Cardiac septum (tissue), 1 donor: ENCODE measurements at regions of chr16 and their contacts with region 1.

Region 1: DNA sequence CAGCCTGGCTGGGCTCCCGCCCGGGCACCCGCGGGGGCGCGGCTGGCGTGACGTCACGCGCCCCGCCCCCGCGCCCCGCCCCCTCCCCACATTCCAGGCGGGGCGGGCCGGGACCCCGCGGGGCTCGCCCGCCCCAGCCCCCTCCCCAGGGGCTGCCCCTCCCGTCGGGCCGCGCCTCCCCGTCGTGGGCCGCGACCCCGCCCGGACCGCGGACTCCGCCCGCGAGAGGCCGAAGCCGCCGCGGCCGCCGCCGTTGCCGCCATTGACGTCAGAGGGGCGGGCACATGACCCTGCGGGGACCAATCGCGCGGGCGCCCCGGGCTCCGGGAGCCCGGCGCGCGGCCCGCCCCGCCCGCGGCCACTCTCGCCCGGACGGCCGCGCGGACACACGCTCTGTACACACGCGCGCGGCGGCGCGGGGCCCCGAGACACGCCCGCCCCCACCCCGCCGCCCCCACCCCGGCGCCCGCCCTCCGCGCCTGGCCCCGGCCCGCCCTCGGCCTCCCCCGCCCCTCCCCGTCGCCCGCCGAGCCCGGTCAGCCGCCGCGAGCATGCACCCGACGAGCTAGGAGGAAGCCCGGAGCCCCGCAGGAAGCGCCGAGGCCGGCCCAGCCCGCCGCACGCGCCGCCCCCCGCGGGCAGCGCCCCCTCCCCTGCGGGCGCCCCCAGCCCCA is at the start of gene CMIP:
- DNase-seq: peak; percentile 91
- total RNA-seq, gene CMIP: 19.8 TPM

Region 2: DNA sequence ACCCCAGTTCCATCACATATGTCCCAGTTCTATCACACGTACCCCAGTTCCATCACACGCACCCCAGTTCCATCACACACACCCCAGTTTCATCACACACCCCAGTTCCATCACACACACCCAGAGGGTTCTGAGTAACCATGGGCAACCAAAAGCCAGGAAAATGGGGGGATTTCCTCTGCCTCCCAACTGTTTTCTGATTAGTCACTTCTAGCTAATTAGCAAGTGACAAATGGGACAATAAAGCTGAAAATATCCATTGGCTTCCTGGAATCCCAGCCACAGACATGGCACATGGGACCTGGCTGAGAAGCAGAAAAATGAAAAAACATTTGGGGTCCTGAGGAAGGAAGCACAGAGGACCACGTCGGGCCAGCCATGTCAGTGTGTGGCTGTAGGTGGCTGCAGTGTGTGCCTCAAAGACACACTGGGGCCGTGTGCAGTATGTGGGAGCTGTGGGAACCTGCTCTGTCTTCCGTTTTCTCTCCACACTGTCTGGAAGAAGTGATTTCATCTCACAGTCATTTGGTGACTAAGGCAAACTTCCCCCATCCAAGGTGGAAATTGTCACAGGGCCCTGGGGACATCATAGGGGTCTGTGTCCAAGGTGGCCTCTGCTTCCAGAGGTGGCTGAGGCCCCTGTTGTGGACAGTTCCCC is 106.7 kb after region 1 on chr16:
- intact Hi-C with region 1: loop called (anchors 5 kb)
- DNase-seq: no peak